HEK293T (cell line): ENCODE measurements at regions of chr19 and their contacts with region 1.

Region 1: GRCh38 chr19:41959056-41960053 is at the start of gene RABAC1:
- DNase-seq: peak; percentile 91

Region 2: GRCh38 chr19:41872775-41873647 is 86.3 kb before region 1 on chr19:
- CTCF ChIA-PET with region 1: interaction called, 9 read pairs
- POLR2A ChIA-PET with region 1: interaction called, 15 read pairs
- DNase-seq: peak; percentile 69

Region 3: DNA sequence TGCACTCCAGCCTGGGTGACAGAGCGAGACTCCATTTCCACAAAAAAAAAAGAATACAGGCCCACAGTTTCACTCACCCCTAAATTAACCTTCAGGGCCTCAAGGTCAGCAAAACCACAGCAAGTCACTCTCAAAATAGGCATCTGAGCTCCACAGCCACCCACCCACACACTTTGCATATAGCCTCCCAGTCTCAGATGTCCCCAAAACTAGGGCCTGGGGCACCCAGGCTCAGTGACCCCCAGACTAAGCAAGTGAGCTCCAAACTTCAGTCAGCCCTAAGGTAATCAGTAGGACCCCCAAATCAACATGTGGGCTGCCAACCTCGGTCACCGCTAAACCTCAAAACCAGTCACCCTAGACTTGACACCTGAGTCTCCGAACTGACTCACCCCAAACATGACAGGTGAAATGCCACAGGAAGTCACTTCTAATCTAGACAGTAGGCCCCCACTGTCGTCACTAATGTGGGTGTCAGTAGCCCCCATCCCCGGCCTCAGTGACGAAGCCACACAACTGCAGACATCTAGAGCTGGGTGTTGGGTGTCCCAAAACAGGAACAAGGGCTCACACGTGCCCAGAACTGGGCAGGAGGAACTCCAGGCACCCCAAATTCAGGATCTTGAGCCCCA is 14.1 kb before region 1 on chr19:
- CTCF ChIA-PET with region 1: no interaction called
- POLR2A ChIA-PET with region 1: interaction called, 10 read pairs
- DNase-seq: no peak

Region 4: GRCh38 chr19:42092350-42092749 is 133.0 kb after region 1 on chr19:
- CTCF ChIA-PET with region 1: no interaction called
- POLR2A ChIA-PET with region 1: no interaction called
- DNase-seq: no peak